Dendritic cell treated with granulocyte-macrophage colony-stimulating factor and Interleukin-4, amounts not matched to agents 40 ng/mL and 50 ng/mL, for 4 days (primary cell): ENCODE measurements at regions of chr12 and their contacts with region 1.

Region 1: GRCh38 chr12:55797068-55797467 is 20.5 kb downstream of the SARNP start:
- H3K4me3 Mint-ChIP-seq: no peak overlapping the region
- H3K27ac Mint-ChIP-seq: no peak overlapping the region
- H3K4me1 Mint-ChIP-seq: peaks cover 6% of the 10 kb centered on the region
- H3K27me3 Mint-ChIP-seq: no peaks in the 10 kb centered on the region

Region 2: GRCh38 chr12:55760663-55761062 is 36.4 kb before region 1 on chr12:
- intact Hi-C with region 1: loop called (anchors 5 kb)
- H3K4me3 Mint-ChIP-seq: no peak overlapping the region
- H3K27ac Mint-ChIP-seq: no peak overlapping the region
- H3K4me1 Mint-ChIP-seq: peaks cover 8% of the 10 kb centered on the region
- H3K27me3 Mint-ChIP-seq: no peaks in the 10 kb centered on the region

Region 3: GRCh38 chr12:55842681-55843429 is 45.8 kb after region 1 on chr12 and contains the start of gene MMP19:
- intact Hi-C with region 1: no loop called
- H3K4me3 Mint-ChIP-seq: peak within 1 kb of the TSS; percentile 73
- H3K27ac Mint-ChIP-seq: peak within 1 kb of the TSS; percentile 71
- H3K4me1 Mint-ChIP-seq: peaks cover 78% of the 10 kb centered on the region
- H3K27me3 Mint-ChIP-seq: no peaks in the 10 kb centered on the region